ENCODE measurements at regions of chr2 and their contacts with region 1.

Region 1: DNA sequence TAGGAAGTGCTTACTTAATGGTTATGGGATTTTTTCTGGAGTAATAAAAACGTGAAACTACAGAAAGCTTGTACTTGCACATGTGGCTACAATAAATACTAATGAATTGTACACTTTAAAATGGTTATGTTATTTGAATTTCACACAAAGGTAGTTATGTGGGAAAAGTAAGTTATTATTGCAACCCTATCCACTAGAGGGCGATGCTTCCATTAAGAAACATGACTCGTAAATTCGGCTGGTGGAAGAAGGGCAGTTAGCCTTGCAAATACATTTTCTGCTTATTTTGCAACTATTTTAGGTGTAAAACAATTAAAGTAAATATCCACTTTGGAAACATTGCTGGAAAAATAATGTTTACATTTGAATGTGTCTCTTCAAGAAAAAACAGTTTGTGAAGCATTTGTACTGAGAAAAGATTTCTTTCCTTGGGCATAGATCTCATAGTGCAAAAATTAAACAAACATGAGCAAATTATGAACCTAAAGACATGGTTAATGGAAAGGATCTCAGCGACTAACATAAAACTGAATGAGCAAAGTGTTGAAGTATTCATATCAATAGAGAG is 68.1 kb upstream of the CSRNP3 start:
- DNase-seq: no peak

Region 2: DNA sequence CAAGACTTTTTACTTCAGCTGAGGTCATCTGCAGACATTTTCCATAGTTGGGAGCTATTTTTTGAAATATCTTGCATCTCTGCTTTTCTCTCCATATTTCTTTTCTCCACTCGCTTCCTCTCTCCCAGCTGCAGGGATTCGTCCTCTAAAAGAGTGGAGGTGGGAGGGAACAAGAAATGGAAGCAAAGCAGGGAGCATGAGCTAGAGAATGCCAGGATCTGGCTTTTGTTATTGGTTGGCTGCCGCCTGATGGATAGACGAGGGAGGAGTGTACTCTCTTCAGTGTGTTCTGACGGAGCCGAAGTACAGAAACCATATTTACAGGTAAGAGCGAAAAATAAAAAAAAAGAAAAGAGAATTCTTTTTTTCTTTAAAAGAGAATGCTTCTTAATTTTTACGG is 68.0 kb after region 1 on chr2 and contains the start of gene CSRNP3:
- intact Hi-C with region 1: loop called (anchors 10 kb)
- DNase-seq: peak; percentile 53 to 95 (median 70)

Region 3: DNA sequence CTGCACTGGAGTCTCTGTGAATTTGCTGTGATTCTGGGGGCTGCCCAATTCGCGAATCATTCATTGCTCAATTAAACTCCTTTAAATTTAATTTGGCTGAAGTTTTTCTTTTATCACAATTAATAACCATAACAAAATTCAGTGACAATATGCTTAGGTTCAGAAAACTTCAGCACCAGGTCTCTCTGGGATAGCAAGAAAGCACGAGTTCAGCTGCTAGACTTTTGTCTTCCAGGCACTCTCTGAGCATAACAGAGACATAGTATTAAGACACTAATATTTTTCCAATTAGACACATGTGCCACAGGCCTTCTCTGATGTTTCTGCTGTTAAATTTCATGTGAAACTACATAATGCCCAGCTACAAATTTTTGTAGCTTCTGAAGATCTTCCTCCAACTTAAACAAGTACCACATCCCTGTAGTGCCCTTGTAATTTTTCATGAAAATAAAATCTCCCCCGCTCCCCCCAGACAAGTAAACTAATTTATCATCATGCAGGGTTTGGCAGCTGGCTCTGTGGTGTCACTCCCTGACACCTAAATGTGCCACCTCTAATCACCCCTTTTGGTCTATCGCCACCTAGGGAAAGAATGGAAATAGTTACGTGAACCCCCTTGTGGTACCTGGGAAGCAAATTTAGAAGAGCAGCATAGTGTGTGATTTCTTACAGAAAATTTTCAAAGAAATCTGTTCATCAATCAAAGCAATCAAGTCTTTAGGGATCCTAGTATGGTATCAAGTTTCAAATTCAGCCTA is 162.3 kb after region 1 on chr2:
- intact Hi-C with region 1: loop called (anchors 10 kb)
- DNase-seq: no peak

Region 4: DNA sequence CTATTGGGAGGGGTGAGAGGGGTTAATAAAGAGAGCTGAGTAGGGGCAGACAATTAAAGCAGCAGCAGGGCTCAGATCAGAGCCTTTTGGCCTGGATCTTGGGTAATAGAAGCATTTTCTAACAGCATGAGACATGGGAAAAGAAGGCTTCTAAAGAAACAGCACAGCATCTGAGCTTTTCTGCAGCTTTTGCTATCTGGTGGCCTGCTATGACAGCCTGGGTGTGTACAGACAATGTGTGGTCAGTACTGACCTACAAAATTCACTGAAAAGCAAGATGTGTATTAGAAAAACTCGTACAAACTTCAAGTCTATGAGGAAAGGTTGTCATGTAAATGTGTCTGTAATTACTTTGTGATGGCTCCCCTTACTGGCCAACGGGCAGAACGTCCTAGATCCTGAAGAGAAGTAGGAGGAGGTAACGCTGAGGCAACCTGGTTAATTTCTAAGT is 297.1 kb after region 1 on chr2:
- intact Hi-C with region 1: loop called (anchors 5 kb)
- DNase-seq: peak in 5 of 10 donors; percentile 20 to 46 (median 34)

Region 5: DNA sequence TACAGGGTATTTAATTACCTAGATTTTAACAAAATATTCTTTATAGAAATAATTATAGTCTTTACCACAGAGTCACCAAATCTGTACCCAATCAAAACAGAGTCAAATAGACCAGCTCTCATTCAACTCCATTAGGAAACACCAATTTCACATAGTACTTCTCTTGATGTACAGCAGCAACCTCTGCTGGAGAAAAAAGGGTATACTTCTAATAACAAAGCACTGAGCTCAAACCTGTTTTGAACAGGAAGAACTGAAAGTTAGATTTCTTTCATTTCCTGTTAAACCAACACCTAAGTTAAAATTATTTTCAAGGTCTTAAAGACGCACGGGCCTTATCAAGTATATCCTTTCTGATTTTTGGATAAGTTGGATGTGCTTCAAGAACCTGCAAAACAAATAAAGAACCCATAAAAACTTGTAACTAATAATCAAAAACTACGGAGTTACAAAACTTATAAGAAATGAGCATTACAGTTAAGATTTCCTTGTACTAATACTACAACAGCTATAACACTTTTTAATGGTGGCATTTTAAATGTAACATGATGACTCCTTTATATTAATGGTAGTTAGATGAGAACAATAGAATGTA is 473.2 kb after region 1 on chr2:
- intact Hi-C with region 1: loop called (anchors 1 kb)
- DNase-seq: no peak